Activated CD8-positive, alpha-beta T cell treated with anti-CD3 and anti-CD28 coated beads for 36 hours (primary cell): ENCODE measurements at regions of chr4 and their contacts with region 1.

Region 1: DNA sequence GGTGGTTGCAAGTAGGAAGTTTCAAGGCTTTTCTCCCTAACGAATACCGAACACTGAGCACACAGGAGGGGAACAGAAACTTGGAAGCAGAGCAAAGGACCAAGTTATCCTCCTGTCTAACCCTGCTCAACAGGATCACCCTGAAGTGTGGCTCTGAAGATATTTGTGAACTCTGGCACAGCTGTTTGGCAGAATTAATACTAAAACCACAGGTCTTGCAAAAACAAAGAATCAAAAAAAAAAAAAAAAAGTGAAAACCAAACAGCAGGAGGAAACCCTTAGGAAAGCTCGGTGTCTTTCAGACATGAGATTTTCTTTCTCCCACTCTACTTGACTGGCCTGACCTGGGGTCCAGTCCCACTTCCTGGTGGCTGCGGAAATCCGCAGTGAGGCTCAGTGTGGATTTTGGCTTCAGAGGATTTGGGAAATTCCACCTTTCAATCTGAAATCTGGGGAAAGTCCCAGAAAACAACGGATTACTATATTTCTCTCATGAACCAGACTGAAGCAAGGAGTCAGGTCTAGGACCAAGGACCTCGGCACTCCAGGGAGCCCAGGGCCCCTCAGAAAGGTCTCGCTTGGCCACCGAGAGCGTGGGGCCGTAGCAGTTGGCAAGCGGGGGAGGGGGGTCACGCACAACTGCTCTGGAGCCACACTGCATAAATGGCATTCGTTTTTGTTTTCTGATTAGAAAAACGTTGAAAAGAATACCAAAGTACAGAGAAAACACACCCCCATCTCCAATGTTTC is 867 bp downstream of the TIFA start:
- DNase-seq: peak; percentile 32
- ATAC-seq: no peak
- H3K4me3 Mint-ChIP-seq: peak overlapping the region; percentile 94
- H3K27ac Mint-ChIP-seq: peak overlapping the region; percentile 96
- H3K4me1 Mint-ChIP-seq: peaks cover 74% of the 10 kb centered on the region
- H3K27me3 Mint-ChIP-seq: no peaks in the 10 kb centered on the region
- CTCF ChIP-seq: no peak

Region 2: DNA sequence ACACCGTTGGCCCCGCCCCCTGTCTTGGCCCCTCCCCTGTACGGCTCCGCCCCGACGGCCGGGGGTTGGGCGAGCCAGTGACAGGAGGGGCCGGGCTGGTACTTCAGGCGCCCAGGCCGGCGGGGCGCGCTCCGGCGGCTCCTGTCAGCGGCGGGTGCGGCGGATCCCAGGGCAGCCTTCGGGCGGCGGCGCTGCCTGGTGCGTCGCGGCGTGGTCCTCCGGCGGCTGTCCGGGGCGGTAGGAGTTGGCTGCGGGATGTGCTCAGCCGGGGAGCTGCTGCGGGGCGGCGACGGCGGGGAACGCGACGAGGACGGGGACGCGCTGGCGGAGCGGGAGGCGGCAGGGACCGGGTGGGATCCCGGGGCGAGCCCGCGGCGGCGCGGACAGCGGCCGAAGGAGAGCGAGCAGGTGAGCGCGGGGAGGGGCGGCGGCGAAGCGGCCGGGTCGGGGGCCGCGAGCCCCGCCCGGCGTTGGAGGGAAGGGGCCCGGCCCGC is 139.5 kb before region 1 on chr4 and contains the start of gene FAM241A:
- CTCF ChIA-PET with region 1: no interaction called
- POLR2A ChIA-PET with region 1: interaction called, 5 read pairs
- intact Hi-C with region 1: loop called (anchors 5 kb)
- DNase-seq: peak; percentile 89
- ATAC-seq: peak; percentile 95
- H3K4me3 Mint-ChIP-seq: peak within 1 kb of the TSS; percentile 97
- H3K27ac Mint-ChIP-seq: peak within 1 kb of the TSS; percentile 93
- H3K4me1 Mint-ChIP-seq: peaks cover 39% of the 10 kb centered on the region
- H3K27me3 Mint-ChIP-seq: no peaks in the 10 kb centered on the region
- CTCF ChIP-seq: no peak
- total RNA-seq, gene FAM241A: 4.1 to 4.5 TPM

Region 3: DNA sequence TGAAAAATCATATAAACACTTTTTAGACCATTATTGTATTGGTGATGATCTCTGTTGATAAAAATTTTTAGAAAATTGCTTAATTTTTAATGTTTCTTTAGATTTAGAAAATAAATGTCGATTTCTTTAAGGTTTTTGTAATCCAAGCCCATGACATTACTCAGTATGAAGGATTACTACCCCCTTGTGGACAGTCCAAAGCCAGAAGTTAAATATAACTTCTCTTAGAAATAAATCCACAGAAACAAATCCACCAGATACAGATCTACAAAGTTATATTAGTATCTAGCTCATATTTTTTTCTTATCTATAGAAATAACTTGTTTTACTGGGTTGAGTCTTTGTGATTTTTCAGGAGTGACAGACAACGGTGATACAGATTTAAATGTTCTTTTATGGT is 18.0 kb before region 1 on chr4:
- CTCF ChIA-PET with region 1: interaction called, 7 read pairs
- POLR2A ChIA-PET with region 1: interaction called, 14 read pairs
- intact Hi-C with region 1: no loop called
- DNase-seq: no peak
- ATAC-seq: no peak
- H3K4me3 Mint-ChIP-seq: no peak overlapping the region
- H3K27ac Mint-ChIP-seq: no peak overlapping the region
- H3K4me1 Mint-ChIP-seq: peaks cover 24% of the 10 kb centered on the region
- H3K27me3 Mint-ChIP-seq: no peaks in the 10 kb centered on the region
- CTCF ChIP-seq: peak; percentile 41

Region 4: GRCh38 chr4:112312610-112313239 is 27.9 kb after region 1 on chr4:
- CTCF ChIA-PET with region 1: interaction called, 5 read pairs
- POLR2A ChIA-PET with region 1: interaction called, 10 read pairs
- intact Hi-C with region 1: no loop called
- DNase-seq: no peak
- ATAC-seq: no peak
- H3K4me3 Mint-ChIP-seq: no peak overlapping the region
- H3K27ac Mint-ChIP-seq: no peak overlapping the region
- H3K4me1 Mint-ChIP-seq: peaks cover 20% of the 10 kb centered on the region
- H3K27me3 Mint-ChIP-seq: no peaks in the 10 kb centered on the region
- CTCF ChIP-seq: no peak

Region 5: GRCh38 chr4:112327965-112328733 is 43.3 kb after region 1 on chr4:
- CTCF ChIA-PET with region 1: interaction called, 10 read pairs
- POLR2A ChIA-PET with region 1: interaction called, 4 read pairs
- intact Hi-C with region 1: no loop called
- DNase-seq: peak; percentile 21
- ATAC-seq: peak; percentile 55
- H3K4me3 Mint-ChIP-seq: no peak overlapping the region
- H3K27ac Mint-ChIP-seq: no peak overlapping the region
- H3K4me1 Mint-ChIP-seq: no peaks in the 10 kb centered on the region
- H3K27me3 Mint-ChIP-seq: no peaks in the 10 kb centered on the region
- CTCF ChIP-seq: peak; percentile 49